Activated CD4-positive, alpha-beta T cell treated with anti-CD3 and anti-CD28 coated beads, Interleukin-2, amount 10 ng/mL, durations not matched to agents 24 days and 14 days (primary cell): ENCODE measurements at regions of chr2 and their contacts with region 1.

Region 1: GRCh38 chr2:112254466-112255239 is at the start of gene ZC3H8:
- DNase-seq: peak; percentile 99
- H3K4me3 Mint-ChIP-seq: peak within 1 kb of the TSS; percentile 82
- H3K27ac Mint-ChIP-seq: peak within 1 kb of the TSS; percentile 93
- H3K4me1 Mint-ChIP-seq: peaks cover 24% of the 10 kb centered on the region
- H3K27me3 Mint-ChIP-seq: no peaks in the 10 kb centered on the region
- total RNA-seq, gene ZC3H8: 34.5 and 41.4 TPM in 2 replicates

Region 2: GRCh38 chr2:112054847-112055729 is 199.6 kb before region 1 on chr2 and contains the start of gene TMEM87B:
- intact Hi-C with region 1: loop called (anchors 2 kb)
- DNase-seq: peak; percentile 98
- H3K4me3 Mint-ChIP-seq: peak within 1 kb of the TSS; percentile 99
- H3K27ac Mint-ChIP-seq: peak within 1 kb of the TSS; percentile 99
- H3K4me1 Mint-ChIP-seq: peaks cover 36% of the 10 kb centered on the region
- H3K27me3 Mint-ChIP-seq: peaks cover 1% of the 10 kb centered on the region
- total RNA-seq, gene TMEM87B: 13.9 and 15.8 TPM in 2 replicates

Region 3: GRCh38 chr2:112181571-112182290 is 72.9 kb before region 1 on chr2:
- intact Hi-C with region 1: loop called (anchors 2 kb)
- DNase-seq: peak; percentile 89
- H3K4me3 Mint-ChIP-seq: peak overlapping the region; percentile 91
- H3K27ac Mint-ChIP-seq: peak overlapping the region; percentile 93
- H3K4me1 Mint-ChIP-seq: peaks cover 45% of the 10 kb centered on the region
- H3K27me3 Mint-ChIP-seq: no peaks in the 10 kb centered on the region

Region 4: DNA sequence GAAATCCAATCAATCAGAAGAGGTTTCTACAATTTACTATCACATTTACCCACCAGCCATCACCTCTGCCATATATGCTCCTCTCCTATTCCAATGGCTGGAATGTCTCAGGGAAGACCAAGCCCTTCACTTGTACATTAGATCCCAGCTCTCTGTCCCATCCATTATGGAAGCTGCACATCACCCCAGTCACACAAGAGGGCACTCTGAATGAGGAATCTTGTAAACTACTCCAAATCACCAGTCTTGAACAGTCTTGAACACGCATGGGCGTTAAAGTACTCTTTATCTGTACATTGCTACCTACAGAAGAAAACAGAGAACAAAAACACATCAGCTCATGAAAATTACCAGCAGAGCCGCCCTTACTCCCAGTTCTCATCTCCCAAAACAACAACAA is 38.5 kb before region 1 on chr2:
- intact Hi-C with region 1: no loop called
- DNase-seq: no peak
- H3K4me3 Mint-ChIP-seq: no peak overlapping the region
- H3K27ac Mint-ChIP-seq: no peak overlapping the region
- H3K4me1 Mint-ChIP-seq: peaks cover 4% of the 10 kb centered on the region
- H3K27me3 Mint-ChIP-seq: no peaks in the 10 kb centered on the region

Region 5: GRCh38 chr2:112486895-112487294 is 232.2 kb after region 1 on chr2:
- intact Hi-C with region 1: loop called (anchors 1 kb)
- DNase-seq: no peak
- H3K4me3 Mint-ChIP-seq: no peak overlapping the region
- H3K27ac Mint-ChIP-seq: peak overlapping the region; percentile 35
- H3K4me1 Mint-ChIP-seq: peaks cover 39% of the 10 kb centered on the region
- H3K27me3 Mint-ChIP-seq: no peaks in the 10 kb centered on the region

Region 6: GRCh38 chr2:112584134-112584890 is 329.7 kb after region 1 on chr2 and contains the start of gene CHCHD5:
- intact Hi-C with region 1: loop called (anchors 2 kb)
- DNase-seq: peak; percentile 98
- H3K4me3 Mint-ChIP-seq: peak within 1 kb of the TSS; percentile 93
- H3K27ac Mint-ChIP-seq: peak within 1 kb of the TSS; percentile 99
- H3K4me1 Mint-ChIP-seq: peaks cover 33% of the 10 kb centered on the region
- H3K27me3 Mint-ChIP-seq: no peaks in the 10 kb centered on the region
- total RNA-seq, gene CHCHD5: 36.4 and 37.6 TPM in 2 replicates

Region 7: GRCh38 chr2:112884869-112885505 is 630.3 kb after region 1 on chr2:
- intact Hi-C with region 1: no loop called
- DNase-seq: peak; percentile 94
- H3K4me3 Mint-ChIP-seq: peak overlapping the region; percentile 22
- H3K27ac Mint-ChIP-seq: peak overlapping the region; percentile 21
- H3K4me1 Mint-ChIP-seq: peaks cover 26% of the 10 kb centered on the region
- H3K27me3 Mint-ChIP-seq: no peaks in the 10 kb centered on the region